Naive thymus-derived CD4-positive, alpha-beta T cell (primary cell): ENCODE measurements at regions of chr3 and their contacts with region 1.

Region 1: GRCh38 chr3:114827495-114827894 is 319.6 kb downstream of the ZBTB20 start:
- DNase-seq: peak in 2 of 9 donors; percentile 11 to 18
- ATAC-seq: peak; percentile 50
- H3K4me3 ChIP-seq: no peak overlapping the region
- H3K4me3 Mint-ChIP-seq: no peak overlapping the region
- H3K27ac ChIP-seq: no peak overlapping the region
- H3K27ac Mint-ChIP-seq: no peak overlapping the region
- H3K4me1 ChIP-seq: no peaks in the 10 kb centered on the region
- H3K4me1 Mint-ChIP-seq: peaks cover 0 to 11% (median 4%) of the 10 kb centered on the region in 7 donors
- H3K27me3 ChIP-seq: no peaks in the 10 kb centered on the region
- H3K27me3 Mint-ChIP-seq: no peaks in the 10 kb centered on the region

Region 2: GRCh38 chr3:115040673-115041286 is 213.3 kb after region 1 on chr3:
- CTCF ChIA-PET with region 1: no interaction called
- POLR2A ChIA-PET with region 1: no interaction called
- intact Hi-C with region 1: loop called in 1 of 2 experiments (anchors 1 kb)
- DNase-seq: peak in 7 of 9 donors; percentile 15 to 48 (median 30)
- ATAC-seq: peak; percentile 66
- H3K4me3 ChIP-seq: no peak overlapping the region
- H3K4me3 Mint-ChIP-seq: no peak overlapping the region
- H3K27ac ChIP-seq: no peak overlapping the region
- H3K27ac Mint-ChIP-seq: peak overlapping the region in 2 of 9 donors; percentile 3 to 51
- H3K4me1 ChIP-seq: no peaks in the 10 kb centered on the region
- H3K4me1 Mint-ChIP-seq: peaks cover 0 to 35% (median 16%) of the 10 kb centered on the region in 7 donors
- H3K27me3 ChIP-seq: no peaks in the 10 kb centered on the region
- H3K27me3 Mint-ChIP-seq: no peaks in the 10 kb centered on the region

Region 3: DNA sequence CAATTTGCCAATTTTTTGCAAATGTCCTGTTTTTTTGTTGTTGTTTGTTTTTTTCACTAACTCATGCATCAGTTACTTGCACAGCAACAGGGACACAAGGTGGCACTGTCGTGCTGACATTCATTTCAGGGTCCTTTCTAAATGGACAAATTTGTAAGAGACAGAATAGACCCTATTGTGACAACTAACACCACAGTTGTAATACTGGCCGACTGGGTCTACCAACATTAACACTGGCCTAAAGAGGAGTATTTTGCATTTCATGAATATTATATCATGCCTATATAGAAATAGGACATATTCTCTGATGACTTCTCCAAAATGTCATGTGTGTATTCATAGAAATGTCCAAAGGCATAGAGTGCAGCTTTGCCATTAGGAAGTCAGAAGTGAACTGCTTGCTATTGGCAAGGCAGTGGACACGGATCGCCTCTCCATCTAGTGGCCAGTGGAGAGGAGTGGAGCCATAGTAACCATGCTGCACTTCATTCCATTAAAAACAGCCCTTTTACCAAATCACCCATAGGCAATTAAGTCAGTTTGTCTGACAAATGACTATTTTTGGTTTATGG is 264.8 kb after region 1 on chr3:
- CTCF ChIA-PET with region 1: no interaction called
- POLR2A ChIA-PET with region 1: no interaction called
- intact Hi-C with region 1: loop called in 1 of 2 experiments (anchors 10 kb)
- DNase-seq: peak; percentile 24 to 62 (median 44)
- ATAC-seq: peak; percentile 76
- H3K4me3 ChIP-seq: no peak overlapping the region
- H3K4me3 Mint-ChIP-seq: no peak overlapping the region
- H3K27ac ChIP-seq: no peak overlapping the region
- H3K27ac Mint-ChIP-seq: peak overlapping the region in 5 of 9 donors; percentile 6 to 46 (median 32)
- H3K4me1 ChIP-seq: peaks cover 0 to 9% of the 10 kb centered on the region in 2 donors
- H3K4me1 Mint-ChIP-seq: peaks cover 3 to 73% (median 44%) of the 10 kb centered on the region in 7 donors
- H3K27me3 ChIP-seq: no peaks in the 10 kb centered on the region
- H3K27me3 Mint-ChIP-seq: no peaks in the 10 kb centered on the region

Region 4: GRCh38 chr3:115217678-115218451 is 390.4 kb after region 1 on chr3:
- CTCF ChIA-PET with region 1: no interaction called
- POLR2A ChIA-PET with region 1: no interaction called
- intact Hi-C with region 1: no loop called
- DNase-seq: peak in 5 of 9 donors; percentile 1 to 19 (median 3)
- ATAC-seq: peak; percentile 52
- H3K4me3 ChIP-seq: no peak overlapping the region
- H3K4me3 Mint-ChIP-seq: no peak overlapping the region
- H3K27ac ChIP-seq: no peak overlapping the region
- H3K27ac Mint-ChIP-seq: no peak overlapping the region
- H3K4me1 ChIP-seq: no peaks in the 10 kb centered on the region
- H3K4me1 Mint-ChIP-seq: no peaks in the 10 kb centered on the region
- H3K27me3 ChIP-seq: no peaks in the 10 kb centered on the region
- H3K27me3 Mint-ChIP-seq: peaks cover 0 to 17% (median 4%) of the 10 kb centered on the region in 5 donors

Region 5: GRCh38 chr3:115301364-115301860 is 473.9 kb after region 1 on chr3:
- CTCF ChIA-PET with region 1: no interaction called
- POLR2A ChIA-PET with region 1: no interaction called
- intact Hi-C with region 1: no loop called
- DNase-seq: no peak
- ATAC-seq: no peak
- H3K4me3 ChIP-seq: no peak overlapping the region
- H3K4me3 Mint-ChIP-seq: no peak overlapping the region
- H3K27ac ChIP-seq: no peak overlapping the region
- H3K27ac Mint-ChIP-seq: peak overlapping the region in 1 of 9 donors; percentile 16
- H3K4me1 ChIP-seq: no peaks in the 10 kb centered on the region
- H3K4me1 Mint-ChIP-seq: no peaks in the 10 kb centered on the region
- H3K27me3 ChIP-seq: no peaks in the 10 kb centered on the region
- H3K27me3 Mint-ChIP-seq: peaks cover 0 to 6% (median 0%) of the 10 kb centered on the region in 5 donors

Region 6: GRCh38 chr3:115819785-115820384 is 992.4 kb after region 1 on chr3:
- CTCF ChIA-PET with region 1: no interaction called
- POLR2A ChIA-PET with region 1: no interaction called
- intact Hi-C with region 1: loop called (anchors 2 to 5 kb)
- DNase-seq: peak in 8 of 9 donors; percentile 26 to 67 (median 62)
- ATAC-seq: peak; percentile 97
- H3K4me3 ChIP-seq: no peak overlapping the region
- H3K4me3 Mint-ChIP-seq: no peak overlapping the region
- H3K27ac ChIP-seq: no peak overlapping the region
- H3K27ac Mint-ChIP-seq: no peak overlapping the region
- H3K4me1 ChIP-seq: no peaks in the 10 kb centered on the region
- H3K4me1 Mint-ChIP-seq: peaks cover 0 to 2% (median 0%) of the 10 kb centered on the region in 7 donors
- H3K27me3 ChIP-seq: no peaks in the 10 kb centered on the region
- H3K27me3 Mint-ChIP-seq: peaks cover 0 to 9% (median 0%) of the 10 kb centered on the region in 5 donors